ENCODE measurements at regions of chr2 and their contacts with region 1.

Region 1: DNA sequence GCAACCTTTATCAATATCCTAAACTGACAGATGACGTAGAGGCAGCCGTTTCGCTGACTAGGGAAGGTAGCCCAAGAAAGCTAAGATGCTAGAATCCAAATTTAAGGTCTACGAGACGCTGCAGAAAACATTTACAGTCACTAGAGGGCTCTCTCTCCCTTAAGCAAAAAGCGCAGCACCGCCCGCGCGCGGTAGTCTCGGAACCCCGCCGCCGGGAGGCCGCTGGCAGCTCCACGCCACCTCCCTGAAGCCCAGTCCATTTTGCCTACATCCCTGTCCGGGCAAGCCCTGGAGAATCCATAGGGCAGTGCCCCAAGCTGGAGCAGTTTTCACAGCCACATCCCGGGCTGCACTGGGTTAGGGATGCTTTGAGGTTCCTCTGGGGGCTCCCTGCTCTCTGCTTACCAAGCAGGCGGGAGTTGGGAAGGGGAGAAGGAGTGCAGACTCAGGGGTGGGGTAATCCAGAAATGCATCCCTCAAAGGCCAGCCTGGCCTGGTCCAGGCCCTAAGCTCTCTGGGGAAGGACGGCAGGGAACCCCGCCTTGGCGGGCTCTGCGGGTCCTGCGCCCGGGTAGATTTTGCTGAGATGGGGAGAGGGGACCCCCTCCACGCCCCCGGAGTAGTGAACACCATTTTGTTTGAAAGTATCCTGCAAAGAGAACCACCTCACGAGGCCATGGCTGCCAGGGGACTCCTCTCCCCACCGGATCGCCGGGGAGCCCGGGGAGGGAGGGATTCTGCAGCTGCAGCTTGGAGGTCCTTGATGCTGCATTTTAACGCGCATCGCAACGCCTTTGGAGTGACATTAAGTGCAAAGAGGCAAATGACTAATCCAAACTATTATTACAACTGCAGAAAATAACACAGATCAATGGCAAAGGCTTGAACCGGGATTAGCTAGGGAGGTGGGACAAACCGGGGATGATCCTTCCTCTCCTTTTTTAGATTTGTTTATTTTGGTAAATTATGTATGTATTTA is 1.3 kb upstream of the DPYSL5 start:
- DNase-seq: peak; percentile 68 to 83
- ATAC-seq: peak; percentile 78 to 92 (median 86)
- H3K4me3 ChIP-seq: no peak overlapping the region
- H3K27ac ChIP-seq: no peak overlapping the region
- H3K4me1 ChIP-seq: peaks cover 18% of the 10 kb centered on the region
- H3K27me3 ChIP-seq: peaks cover 0 to 72% (median 37%) of the 10 kb centered on the region in 3 donors
- CTCF ChIP-seq: peak; percentile 81

Region 2: DNA sequence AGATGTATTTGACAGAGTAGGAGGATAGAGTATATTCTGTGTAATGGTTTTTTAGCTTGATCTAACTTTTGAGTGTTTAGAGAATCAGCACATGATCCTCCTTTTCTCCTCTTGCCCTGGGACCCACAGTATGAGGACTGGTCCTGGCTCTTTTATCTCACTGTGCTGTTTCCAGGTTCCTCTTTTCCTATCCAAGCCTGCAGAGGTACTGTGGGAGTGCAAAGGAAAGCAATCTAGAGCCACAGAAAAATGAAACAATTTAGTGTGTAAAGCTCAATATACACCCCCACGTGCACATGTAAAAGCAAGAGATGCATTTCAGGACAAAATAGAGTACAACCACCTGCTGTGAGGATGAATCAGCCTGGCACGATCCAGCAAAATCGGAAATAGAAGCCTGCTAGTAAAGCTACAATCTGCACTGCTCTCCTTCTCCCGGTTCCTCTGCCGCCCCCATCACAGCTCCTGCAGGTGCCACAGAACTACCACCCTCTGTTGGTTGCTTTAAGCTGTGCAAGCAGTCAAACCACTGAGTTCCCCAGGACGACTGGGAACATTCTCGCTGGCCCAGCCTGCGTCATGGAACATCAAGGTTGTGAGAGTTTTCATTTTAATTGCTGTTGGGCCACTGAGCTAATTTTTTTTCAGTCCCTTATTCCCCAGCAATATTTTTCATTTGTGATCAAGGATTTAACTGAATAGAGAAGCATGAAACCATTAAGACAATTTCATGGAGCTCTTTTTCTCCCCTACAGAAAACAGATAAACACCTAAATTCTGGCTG is 76.0 kb after region 1 on chr2:
- intact Hi-C with region 1: loop called (anchors 2 to 5 kb)
- DNase-seq: peak; percentile 34 to 66
- ATAC-seq: peak; percentile 85 to 96 (median 90)
- H3K4me3 ChIP-seq: no peak overlapping the region
- H3K27ac ChIP-seq: no peak overlapping the region
- H3K4me1 ChIP-seq: no peaks in the 10 kb centered on the region
- H3K27me3 ChIP-seq: no peaks in the 10 kb centered on the region
- CTCF ChIP-seq: peak; percentile 64

Region 3: GRCh38 chr2:26942543-26943295 is 96.1 kb after region 1 on chr2:
- intact Hi-C with region 1: loop called (anchors 1 to 2 kb)
- DNase-seq: peak; percentile 60 to 75
- ATAC-seq: peak; percentile 58 to 89 (median 67)
- H3K4me3 ChIP-seq: no peak overlapping the region
- H3K27ac ChIP-seq: no peak overlapping the region
- H3K4me1 ChIP-seq: no peaks in the 10 kb centered on the region
- H3K27me3 ChIP-seq: peaks cover 0 to 2% (median 0%) of the 10 kb centered on the region in 3 donors
- CTCF ChIP-seq: peak; percentile 81

Region 4: DNA sequence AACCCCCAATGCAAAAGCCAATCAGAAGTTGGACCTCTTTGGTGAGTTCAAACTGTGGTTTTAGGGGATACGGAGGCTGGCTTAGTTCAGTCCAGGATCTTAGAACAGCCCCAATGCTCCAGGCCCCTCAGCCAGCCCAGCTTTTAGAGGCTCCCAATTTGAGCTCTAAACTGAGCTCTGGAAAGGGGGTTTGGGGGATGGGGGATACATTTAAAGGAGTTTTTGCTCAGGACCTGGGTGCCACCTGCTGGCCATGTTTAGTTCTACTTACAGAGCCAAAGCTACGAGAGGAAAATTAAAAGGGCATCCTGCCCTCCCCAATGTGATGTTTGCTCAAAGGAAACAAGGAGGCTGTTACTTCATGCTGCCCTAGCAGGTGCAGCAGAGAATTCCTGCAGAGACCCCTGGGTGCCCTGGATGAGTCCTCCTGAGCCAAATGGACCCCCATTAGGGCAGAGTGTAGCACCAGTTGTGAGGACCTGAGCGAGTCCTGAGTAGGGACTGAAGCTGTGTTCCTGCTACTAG is 170.2 kb after region 1 on chr2:
- intact Hi-C with region 1: loop called (anchors 5 to 10 kb)
- DNase-seq: peak; percentile 53 to 70
- ATAC-seq: peak; percentile 40 to 68 (median 52)
- H3K4me3 ChIP-seq: no peak overlapping the region
- H3K27ac ChIP-seq: peak overlapping the region; percentile 18
- H3K4me1 ChIP-seq: peaks cover 56% of the 10 kb centered on the region
- H3K27me3 ChIP-seq: no peaks in the 10 kb centered on the region
- CTCF ChIP-seq: peak; percentile 73

Region 5: DNA sequence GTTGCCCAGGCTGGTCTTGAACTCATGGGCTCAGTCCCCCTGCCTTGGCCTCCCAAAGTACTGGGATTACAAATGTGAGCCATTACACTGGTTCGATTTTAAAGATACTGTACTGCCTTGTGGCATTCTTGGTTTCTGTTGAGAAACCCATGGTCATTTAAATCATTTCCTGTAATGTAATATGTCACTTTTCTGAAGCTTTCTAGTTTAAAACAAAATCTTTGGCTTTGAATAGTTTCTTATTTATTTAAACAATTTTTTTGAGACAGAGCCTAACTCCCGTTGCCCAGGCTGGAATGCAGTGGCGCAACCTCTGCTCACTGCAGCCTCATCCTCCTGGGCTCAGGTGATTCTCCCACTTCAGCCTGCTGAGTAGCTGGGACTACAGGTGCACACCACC is 745.1 kb after region 1 on chr2:
- intact Hi-C with region 1: no loop called
- DNase-seq: no peak
- ATAC-seq: no peak
- H3K4me3 ChIP-seq: no peak overlapping the region
- H3K27ac ChIP-seq: no peak overlapping the region
- H3K4me1 ChIP-seq: no peaks in the 10 kb centered on the region
- H3K27me3 ChIP-seq: no peaks in the 10 kb centered on the region
- CTCF ChIP-seq: no peak

Measured in psoas muscle (tissue), 8 donors.